ENCODE measurements at regions of chr14 and their contacts with region 1.

Region 1: GRCh38 chr14:20873370-20874177 is 17.6 kb upstream of the RNASE3 start:
- DNase-seq: peak; percentile 95
- ATAC-seq: peak; percentile 98
- H3K4me3 Mint-ChIP-seq: peak overlapping the region; percentile 58
- H3K27ac Mint-ChIP-seq: peak overlapping the region; percentile 49; the same call in 1 of the 2 replicates
- H3K4me1 Mint-ChIP-seq: peaks cover 9% of the 10 kb centered on the region
- H3K27me3 Mint-ChIP-seq: peaks cover 48% of the 10 kb centered on the region
- CTCF ChIP-seq: peak; percentile 74

Region 2: DNA sequence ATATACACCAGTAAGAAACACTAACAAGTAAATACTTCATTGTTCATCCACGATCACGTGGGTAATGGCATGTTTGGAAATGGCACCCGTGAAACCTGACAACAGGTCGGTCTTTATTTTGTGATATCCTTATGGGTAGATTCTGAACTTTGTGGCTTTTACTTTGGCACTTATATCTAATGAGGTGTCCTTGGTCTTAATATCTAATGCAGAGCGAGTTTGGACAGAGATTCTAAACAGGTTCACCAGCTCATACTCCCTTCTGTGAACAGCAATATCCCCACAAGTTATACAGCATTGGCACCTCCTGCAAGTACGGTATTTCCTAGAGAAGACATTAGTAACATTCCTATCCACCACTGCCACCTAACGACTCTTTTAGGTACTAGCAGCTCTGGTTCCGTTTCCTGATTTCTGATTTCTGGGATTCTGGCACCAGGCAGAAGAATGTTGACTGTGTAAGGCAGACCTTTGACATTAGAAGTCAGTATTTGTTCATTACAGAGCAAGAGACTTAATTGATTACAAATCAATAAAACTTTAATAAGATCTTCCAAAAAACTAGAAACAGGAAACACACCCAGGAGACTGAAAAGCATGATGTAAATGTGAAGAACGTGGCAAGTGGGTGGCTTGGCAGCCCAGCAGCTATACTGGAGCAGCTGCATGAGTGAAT is 182.6 kb before region 1 on chr14:
- CTCF ChIA-PET with region 1: interaction called, 16 read pairs
- POLR2A ChIA-PET with region 1: no interaction called
- DNase-seq: peak; percentile 41
- ATAC-seq: peak; percentile 92
- H3K4me3 Mint-ChIP-seq: no peak overlapping the region
- H3K27ac Mint-ChIP-seq: no peak overlapping the region
- H3K4me1 Mint-ChIP-seq: peaks cover 5% of the 10 kb centered on the region; the same call in 1 of the 2 replicates
- H3K27me3 Mint-ChIP-seq: peaks cover 4% of the 10 kb centered on the region
- CTCF ChIP-seq: peak; percentile 58; the same call in 1 of the 2 replicates

Region 3: DNA sequence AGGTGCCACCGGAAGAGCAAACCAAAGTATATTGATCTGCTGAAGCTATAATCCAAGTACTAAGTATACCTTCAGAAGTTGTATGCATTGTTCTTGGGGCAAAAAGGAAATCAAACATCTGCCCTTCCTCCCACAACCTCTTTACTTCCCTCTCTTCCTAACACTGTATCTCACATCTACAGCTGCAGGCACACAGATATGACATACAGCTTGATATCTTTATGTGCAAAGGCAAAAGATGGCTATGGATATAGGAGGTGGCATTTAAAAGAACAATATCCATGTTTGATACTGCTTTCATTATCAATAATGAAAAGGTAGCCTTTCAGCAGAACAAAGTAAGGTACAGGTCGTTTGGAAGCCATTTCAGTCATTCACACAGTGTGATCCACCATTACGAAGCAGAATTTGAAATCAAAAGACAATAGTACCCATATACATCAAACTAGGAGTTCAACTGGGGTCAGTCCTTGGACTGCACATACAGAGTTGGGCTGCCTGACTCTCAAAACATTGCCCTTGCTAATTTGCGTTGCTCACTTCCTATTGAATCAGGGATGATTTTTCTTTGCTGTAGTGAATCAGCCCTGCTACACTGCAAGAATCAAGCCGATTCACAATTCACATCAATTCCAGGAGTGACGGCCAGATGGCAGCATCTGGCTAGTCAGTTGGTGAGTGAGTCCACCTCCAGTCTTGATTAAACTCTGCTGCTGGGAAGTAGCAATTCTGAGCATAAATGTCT is 176.1 kb before region 1 on chr14:
- CTCF ChIA-PET with region 1: interaction called, 12 read pairs
- POLR2A ChIA-PET with region 1: no interaction called
- DNase-seq: peak; percentile 72
- ATAC-seq: peak; percentile 88
- H3K4me3 Mint-ChIP-seq: no peak overlapping the region
- H3K27ac Mint-ChIP-seq: peak overlapping the region; percentile 47; the same call in 1 of the 2 replicates
- H3K4me1 Mint-ChIP-seq: peaks cover 9% of the 10 kb centered on the region
- H3K27me3 Mint-ChIP-seq: no peaks in the 10 kb centered on the region; the same call in 1 of the 2 replicates
- CTCF ChIP-seq: peak; percentile 56; the same call in 1 of the 2 replicates

Region 4: DNA sequence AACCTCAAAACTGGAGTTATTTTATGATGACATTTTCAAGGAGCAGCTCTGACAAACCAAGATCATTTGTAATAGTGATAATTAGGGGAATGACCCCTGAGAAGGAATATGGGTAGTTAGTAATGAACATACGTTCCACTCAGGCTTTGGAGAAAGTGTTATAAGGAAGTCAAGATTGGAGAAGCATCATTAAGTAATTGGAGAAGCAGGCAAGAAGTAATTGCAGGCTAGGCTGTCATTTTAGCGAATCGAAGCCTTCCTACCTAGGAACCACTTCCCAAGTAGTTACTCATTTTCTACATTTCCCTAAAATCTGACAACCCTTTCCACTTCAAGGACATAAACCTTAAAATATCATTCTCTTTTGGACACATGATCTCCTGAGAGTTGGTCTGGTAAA is 104.2 kb before region 1 on chr14:
- CTCF ChIA-PET with region 1: no interaction called
- POLR2A ChIA-PET with region 1: no interaction called
- DNase-seq: no peak
- ATAC-seq: no peak
- H3K4me3 Mint-ChIP-seq: no peak overlapping the region
- H3K27ac Mint-ChIP-seq: no peak overlapping the region
- H3K4me1 Mint-ChIP-seq: peaks cover 49% of the 10 kb centered on the region
- H3K27me3 Mint-ChIP-seq: peaks cover 40% of the 10 kb centered on the region
- CTCF ChIP-seq: no peak

Region 5: DNA sequence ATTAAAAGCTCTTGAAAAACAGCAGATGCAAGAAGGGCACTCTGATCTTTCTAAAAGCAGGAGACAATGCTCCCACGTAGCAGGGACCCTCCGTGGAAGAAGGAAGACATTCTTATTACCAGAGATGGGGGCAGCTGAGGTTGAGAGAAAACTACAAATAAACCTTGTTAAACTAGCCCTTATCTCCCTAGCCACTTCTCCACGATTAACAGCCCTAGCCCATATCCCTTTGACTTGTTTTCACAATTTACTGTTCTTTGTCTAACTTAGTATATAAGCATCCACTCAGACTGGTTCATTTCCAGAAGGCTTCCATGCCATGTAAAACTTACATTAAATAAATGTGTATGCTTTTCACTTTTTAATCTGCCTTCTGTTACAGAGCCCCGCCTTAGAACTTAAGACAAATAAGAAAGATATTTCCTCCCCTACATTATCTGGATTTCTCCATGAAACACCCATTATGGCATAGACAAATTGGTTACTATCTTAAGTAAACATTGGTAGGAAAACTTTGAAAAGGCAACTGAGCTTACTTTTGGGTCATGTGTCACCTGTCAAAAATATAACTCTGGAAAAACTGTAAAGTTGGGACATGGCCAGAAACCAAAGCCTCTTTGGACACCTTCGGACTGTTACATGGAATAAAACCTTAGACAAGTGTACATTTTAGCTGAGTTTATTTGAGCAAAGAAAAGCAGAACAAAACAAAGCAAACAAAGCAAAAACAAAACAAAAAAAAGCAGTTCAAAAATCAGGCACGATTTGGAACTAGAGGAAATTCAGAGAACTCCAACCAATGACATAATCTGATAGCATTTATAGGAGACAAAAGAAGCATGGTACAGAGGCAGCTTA is 66.0 kb before region 1 on chr14:
- CTCF ChIA-PET with region 1: no interaction called
- POLR2A ChIA-PET with region 1: no interaction called
- DNase-seq: no peak
- ATAC-seq: no peak
- H3K4me3 Mint-ChIP-seq: no peak overlapping the region
- H3K27ac Mint-ChIP-seq: no peak overlapping the region
- H3K4me1 Mint-ChIP-seq: peaks cover 35% of the 10 kb centered on the region
- H3K27me3 Mint-ChIP-seq: no peaks in the 10 kb centered on the region; the same call in 1 of the 2 replicates
- CTCF ChIP-seq: no peak

Region 6: GRCh38 chr14:20818861-20819260 is 54.7 kb before region 1 on chr14:
- CTCF ChIA-PET with region 1: interaction called, 10 read pairs
- POLR2A ChIA-PET with region 1: no interaction called
- DNase-seq: peak; percentile 36
- ATAC-seq: peak; percentile 50
- H3K4me3 Mint-ChIP-seq: no peak overlapping the region
- H3K27ac Mint-ChIP-seq: no peak overlapping the region
- H3K4me1 Mint-ChIP-seq: peaks cover 53% of the 10 kb centered on the region
- H3K27me3 Mint-ChIP-seq: no peaks in the 10 kb centered on the region
- CTCF ChIP-seq: no peak

Region 7: GRCh38 chr14:20836668-20837338 is 36.8 kb before region 1 on chr14:
- CTCF ChIA-PET with region 1: interaction called, 10 read pairs
- POLR2A ChIA-PET with region 1: no interaction called
- DNase-seq: peak; percentile 51
- ATAC-seq: peak; percentile 80
- H3K4me3 Mint-ChIP-seq: no peak overlapping the region
- H3K27ac Mint-ChIP-seq: peak overlapping the region; percentile 65; the same call in 1 of the 2 replicates
- H3K4me1 Mint-ChIP-seq: peaks cover 9% of the 10 kb centered on the region
- H3K27me3 Mint-ChIP-seq: no peaks in the 10 kb centered on the region
- CTCF ChIP-seq: no peak

Region 8: DNA sequence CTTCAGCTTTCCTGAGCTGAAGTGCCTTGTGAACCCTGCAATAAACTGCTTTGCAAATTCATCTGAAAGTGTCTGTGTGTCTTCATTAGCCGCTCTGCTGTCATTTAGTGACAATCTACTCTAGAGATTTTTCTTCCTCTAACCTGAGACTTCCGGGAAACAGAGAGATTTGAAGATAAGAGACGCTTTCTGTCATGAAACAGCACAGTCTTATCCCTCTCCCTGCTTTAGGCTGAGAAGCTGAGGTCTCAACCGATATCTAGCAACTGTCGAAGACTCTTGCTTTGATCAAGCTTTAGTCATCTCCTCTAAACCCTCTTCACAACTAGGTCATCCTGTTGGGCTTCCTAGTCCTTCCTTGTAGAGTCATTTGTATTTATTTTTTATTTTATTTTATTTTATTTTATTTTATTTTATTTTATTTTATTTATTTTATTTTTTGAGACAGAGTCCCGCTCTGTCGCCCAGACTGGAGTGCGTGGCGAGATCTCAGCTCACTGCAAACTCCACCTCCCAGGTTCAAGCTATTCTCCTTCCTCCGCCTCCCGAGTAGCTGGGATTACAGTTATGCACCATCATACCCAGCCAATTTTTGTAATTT is 82.9 kb after region 1 on chr14:
- CTCF ChIA-PET with region 1: interaction called, 14 read pairs
- POLR2A ChIA-PET with region 1: no interaction called
- DNase-seq: no peak
- ATAC-seq: no peak
- H3K4me3 Mint-ChIP-seq: no peak overlapping the region
- H3K27ac Mint-ChIP-seq: no peak overlapping the region
- H3K4me1 Mint-ChIP-seq: peaks cover 5% of the 10 kb centered on the region
- H3K27me3 Mint-ChIP-seq: peaks cover 3% of the 10 kb centered on the region
- CTCF ChIP-seq: no peak

Measured in WTC11 (cell line).